ENCODE measurements at regions of chr19 and their contacts with region 1.

Region 1: DNA sequence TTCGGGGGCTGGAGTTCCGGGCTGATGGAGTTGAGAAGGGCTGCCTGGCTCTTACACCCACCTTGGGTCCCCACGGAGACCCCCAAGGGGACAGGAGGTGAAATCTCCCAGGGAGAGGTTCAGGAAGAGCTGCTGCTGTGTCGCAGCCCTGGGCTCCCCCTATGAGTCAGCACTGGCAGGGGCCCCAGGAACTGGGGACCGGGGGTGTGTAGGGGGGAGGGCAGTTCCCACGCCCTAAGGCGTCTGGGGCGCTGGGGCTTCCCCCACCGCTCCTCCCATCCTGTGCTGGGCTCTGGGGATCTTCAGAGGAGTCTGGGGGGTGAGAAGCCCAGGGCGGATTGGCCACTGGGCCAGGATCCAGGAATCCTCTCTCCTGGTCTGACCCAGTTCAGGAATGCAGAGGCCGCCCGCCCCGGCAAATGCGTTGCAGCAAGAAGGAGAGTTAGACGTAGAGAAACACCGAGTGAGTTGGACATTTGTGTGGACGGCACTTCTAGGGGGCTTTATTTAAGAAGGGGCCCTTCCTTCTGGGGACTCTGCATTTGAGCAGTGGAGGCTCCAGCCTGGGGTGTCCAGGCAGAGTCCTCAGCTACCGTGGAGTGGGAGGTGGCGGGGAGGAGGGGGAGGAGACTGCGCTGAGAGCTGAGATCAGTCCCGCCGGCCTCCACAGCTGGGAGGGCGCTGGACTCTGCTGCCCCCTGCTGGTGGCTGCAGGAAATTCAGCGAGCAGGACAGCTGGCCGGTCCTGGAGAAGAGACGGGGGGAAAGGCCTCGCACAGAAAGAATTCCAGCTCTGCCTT is 15.0 kb upstream of the NANOS3 start:
- DNase-seq: peak; percentile 93 to 95
- ATAC-seq: peak; percentile 84 to 96 (median 87)
- H3K4me3 ChIP-seq: peak overlapping the region; percentile 59
- H3K4me3 Mint-ChIP-seq: peak overlapping the region; percentile 96
- H3K27ac ChIP-seq: peak overlapping the region; percentile 99
- H3K27ac Mint-ChIP-seq: peak overlapping the region; percentile 97 to 100
- H3K4me1 ChIP-seq: peaks cover 34% of the 10 kb centered on the region
- H3K4me1 Mint-ChIP-seq: peaks cover 24 to 44% of the 10 kb centered on the region in 2 donors
- H3K27me3 ChIP-seq: peaks cover 21% of the 10 kb centered on the region
- H3K27me3 Mint-ChIP-seq: peaks cover 17 to 24% of the 10 kb centered on the region in 2 donors
- CTCF ChIP-seq: peak; percentile 98

Region 2: GRCh38 chr19:13277104-13277809 is 584.7 kb before region 1 on chr19:
- intact Hi-C with region 1: loop called (anchors 1 kb)
- DNase-seq: peak; percentile 47 to 90
- ATAC-seq: peak; percentile 90 to 93 (median 93)
- H3K4me3 ChIP-seq: no peak overlapping the region
- H3K4me3 Mint-ChIP-seq: peak overlapping the region; percentile 13
- H3K27ac ChIP-seq: peak overlapping the region; percentile 39
- H3K27ac Mint-ChIP-seq: peak overlapping the region; percentile 64 to 72
- H3K4me1 ChIP-seq: peaks cover 10% of the 10 kb centered on the region
- H3K4me1 Mint-ChIP-seq: peaks cover 0 to 6% of the 10 kb centered on the region in 2 donors
- H3K27me3 ChIP-seq: no peaks in the 10 kb centered on the region
- H3K27me3 Mint-ChIP-seq: peaks cover 0 to 3% of the 10 kb centered on the region in 2 donors
- CTCF ChIP-seq: peak; percentile 73

Region 3: GRCh38 chr19:13597640-13598039 is 264.3 kb before region 1 on chr19:
- intact Hi-C with region 1: loop called (anchors 2 kb)
- DNase-seq: peak in 1 of 2 donors; percentile 77
- ATAC-seq: peak; percentile 68 to 88 (median 79)
- H3K4me3 ChIP-seq: no peak overlapping the region
- H3K4me3 Mint-ChIP-seq: no peak overlapping the region
- H3K27ac ChIP-seq: no peak overlapping the region
- H3K27ac Mint-ChIP-seq: no peak overlapping the region
- H3K4me1 ChIP-seq: no peaks in the 10 kb centered on the region
- H3K4me1 Mint-ChIP-seq: no peaks in the 10 kb centered on the region
- H3K27me3 ChIP-seq: no peaks in the 10 kb centered on the region
- H3K27me3 Mint-ChIP-seq: peaks cover 8% of the 10 kb centered on the region in 2 donors
- CTCF ChIP-seq: no peak

Region 4: GRCh38 chr19:13784731-13785452 is 77.0 kb before region 1 on chr19:
- intact Hi-C with region 1: loop called (anchors 1 kb)
- DNase-seq: peak; percentile 67 to 86
- ATAC-seq: peak; percentile 72 to 80 (median 80)
- H3K4me3 ChIP-seq: no peak overlapping the region
- H3K4me3 Mint-ChIP-seq: peak overlapping the region; percentile 45
- H3K27ac ChIP-seq: no peak overlapping the region
- H3K27ac Mint-ChIP-seq: peak overlapping the region; percentile 21 to 75
- H3K4me1 ChIP-seq: peaks cover 45% of the 10 kb centered on the region
- H3K4me1 Mint-ChIP-seq: peaks cover 21 to 26% of the 10 kb centered on the region in 2 donors
- H3K27me3 ChIP-seq: no peaks in the 10 kb centered on the region
- H3K27me3 Mint-ChIP-seq: no peaks in the 10 kb centered on the region
- CTCF ChIP-seq: peak; percentile 79

Region 5: GRCh38 chr19:13839130-13839937 is 22.6 kb before region 1 on chr19:
- intact Hi-C with region 1: loop called (anchors 2 kb)
- DNase-seq: peak; percentile 80 to 87
- ATAC-seq: peak; percentile 22 to 52 (median 29)
- H3K4me3 ChIP-seq: peak overlapping the region; percentile 69
- H3K4me3 Mint-ChIP-seq: peak overlapping the region; percentile 93
- H3K27ac ChIP-seq: peak overlapping the region; percentile 94
- H3K27ac Mint-ChIP-seq: peak overlapping the region; percentile 99 to 100
- H3K4me1 ChIP-seq: peaks cover 89% of the 10 kb centered on the region
- H3K4me1 Mint-ChIP-seq: peaks cover 45 to 74% of the 10 kb centered on the region in 2 donors
- H3K27me3 ChIP-seq: no peaks in the 10 kb centered on the region
- H3K27me3 Mint-ChIP-seq: no peaks in the 10 kb centered on the region
- CTCF ChIP-seq: no peak

Region 6: DNA sequence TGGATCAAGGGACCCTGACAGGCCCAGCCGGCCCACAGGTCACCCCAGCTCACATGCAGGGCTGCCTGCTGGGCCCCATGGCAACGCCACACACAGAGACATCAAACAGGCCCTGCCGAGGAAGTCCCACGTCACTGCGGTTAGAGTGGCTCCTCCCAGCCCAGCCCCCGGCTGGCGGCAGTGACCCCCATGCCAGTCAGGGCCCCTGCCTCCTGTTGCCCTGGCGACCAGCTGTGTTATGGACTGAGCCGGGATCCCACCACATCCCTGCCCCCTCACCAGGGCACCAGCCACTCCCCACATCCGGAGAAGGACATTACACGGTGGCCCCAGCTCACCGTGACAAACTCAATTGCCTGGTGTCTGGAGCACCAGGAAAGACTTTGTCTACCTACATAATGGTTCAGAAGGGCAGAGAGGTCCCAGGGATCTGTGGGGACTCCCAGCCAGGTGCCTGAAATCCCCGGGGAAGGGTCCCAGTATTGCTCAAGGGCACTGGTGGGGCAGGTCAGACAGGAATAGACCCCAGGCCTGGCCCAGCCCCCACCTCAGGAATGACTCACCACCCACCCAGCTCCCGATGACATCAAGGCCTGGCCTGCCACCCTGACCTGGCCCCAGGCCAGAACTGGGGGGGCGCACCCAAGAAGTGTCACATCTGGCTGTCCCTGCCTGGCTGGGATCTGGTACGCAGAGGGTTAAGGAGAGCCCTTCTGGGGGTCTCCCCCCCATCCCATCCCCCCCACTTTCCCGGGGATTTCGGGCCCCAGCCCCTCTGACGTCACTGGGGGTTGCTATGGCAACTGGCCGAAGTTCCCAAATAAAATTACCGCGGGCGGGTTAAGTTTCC is 15.2 kb before region 1 on chr19:
- intact Hi-C with region 1: loop called (anchors 1 kb)
- DNase-seq: peak; percentile 97 to 99
- ATAC-seq: peak; percentile 48 to 81 (median 63)
- H3K4me3 ChIP-seq: peak overlapping the region; percentile 38
- H3K4me3 Mint-ChIP-seq: peak overlapping the region; percentile 88
- H3K27ac ChIP-seq: peak overlapping the region; percentile 87
- H3K27ac Mint-ChIP-seq: peak overlapping the region; percentile 99 to 100
- H3K4me1 ChIP-seq: peaks cover 76% of the 10 kb centered on the region
- H3K4me1 Mint-ChIP-seq: peaks cover 32 to 61% of the 10 kb centered on the region in 2 donors
- H3K27me3 ChIP-seq: no peaks in the 10 kb centered on the region
- H3K27me3 Mint-ChIP-seq: no peaks in the 10 kb centered on the region
- CTCF ChIP-seq: no peak

Region 7: DNA sequence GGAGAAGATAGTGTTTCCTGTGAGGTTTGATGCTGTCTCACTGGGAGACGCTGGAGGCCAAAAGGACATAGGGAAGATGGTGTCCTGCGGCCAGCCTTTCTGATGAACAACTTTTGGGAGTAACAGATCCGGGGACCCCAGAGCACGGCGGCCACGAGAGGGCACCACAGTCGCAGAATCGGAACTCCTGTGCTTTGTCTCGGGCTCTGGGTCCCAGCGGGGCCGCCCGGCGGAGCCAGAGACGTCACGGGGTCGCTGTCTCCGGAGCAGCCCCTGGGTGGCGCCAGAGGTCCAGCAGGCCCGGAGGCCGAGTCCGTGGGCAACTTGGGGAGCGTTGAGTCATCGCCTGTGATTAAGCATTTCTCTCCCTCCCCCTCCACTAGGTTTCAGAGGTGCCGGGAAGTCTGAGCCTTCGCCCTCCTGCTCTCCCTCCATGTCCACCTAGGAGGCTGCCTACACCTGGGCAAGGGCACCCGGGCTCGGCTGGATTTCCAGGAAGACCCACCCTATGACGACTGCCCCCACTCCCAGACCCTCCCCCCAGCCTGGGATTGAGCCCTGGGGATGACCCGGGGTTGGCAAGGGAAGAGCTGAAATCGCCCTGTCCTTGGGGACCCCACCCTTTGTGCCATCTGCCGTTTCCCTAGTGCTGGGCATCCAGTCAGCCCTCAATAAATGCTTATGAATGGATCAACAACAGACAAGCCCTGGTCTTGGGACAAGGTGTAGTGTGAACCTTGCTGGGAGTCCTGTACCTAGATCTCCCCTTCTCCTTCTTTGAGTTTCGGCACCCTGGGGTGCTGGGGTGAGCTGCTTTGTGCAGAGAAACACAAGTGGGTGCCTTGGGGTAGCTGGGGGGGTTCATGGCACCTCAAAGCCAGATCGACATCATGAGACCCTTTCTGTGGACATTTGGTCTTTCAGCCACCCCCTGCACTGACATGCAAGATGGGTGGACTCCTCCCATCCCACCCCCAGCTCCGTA is 18.4 kb after region 1 on chr19:
- intact Hi-C with region 1: no loop called
- DNase-seq: peak; percentile 98 to 100
- ATAC-seq: peak; percentile 93 to 100 (median 98)
- H3K4me3 ChIP-seq: peak overlapping the region; percentile 11
- H3K4me3 Mint-ChIP-seq: peak overlapping the region; percentile 77
- H3K27ac ChIP-seq: peak overlapping the region; percentile 64
- H3K27ac Mint-ChIP-seq: peak overlapping the region; percentile 75 to 88
- H3K4me1 ChIP-seq: peaks cover 58% of the 10 kb centered on the region
- H3K4me1 Mint-ChIP-seq: peaks cover 18 to 45% of the 10 kb centered on the region in 2 donors
- H3K27me3 ChIP-seq: no peaks in the 10 kb centered on the region
- H3K27me3 Mint-ChIP-seq: no peaks in the 10 kb centered on the region
- CTCF ChIP-seq: peak; percentile 98

Measured in natural killer cell (primary cell).